ENCODE measurements at regions of chr15 and their contacts with region 1.

Region 1: DNA sequence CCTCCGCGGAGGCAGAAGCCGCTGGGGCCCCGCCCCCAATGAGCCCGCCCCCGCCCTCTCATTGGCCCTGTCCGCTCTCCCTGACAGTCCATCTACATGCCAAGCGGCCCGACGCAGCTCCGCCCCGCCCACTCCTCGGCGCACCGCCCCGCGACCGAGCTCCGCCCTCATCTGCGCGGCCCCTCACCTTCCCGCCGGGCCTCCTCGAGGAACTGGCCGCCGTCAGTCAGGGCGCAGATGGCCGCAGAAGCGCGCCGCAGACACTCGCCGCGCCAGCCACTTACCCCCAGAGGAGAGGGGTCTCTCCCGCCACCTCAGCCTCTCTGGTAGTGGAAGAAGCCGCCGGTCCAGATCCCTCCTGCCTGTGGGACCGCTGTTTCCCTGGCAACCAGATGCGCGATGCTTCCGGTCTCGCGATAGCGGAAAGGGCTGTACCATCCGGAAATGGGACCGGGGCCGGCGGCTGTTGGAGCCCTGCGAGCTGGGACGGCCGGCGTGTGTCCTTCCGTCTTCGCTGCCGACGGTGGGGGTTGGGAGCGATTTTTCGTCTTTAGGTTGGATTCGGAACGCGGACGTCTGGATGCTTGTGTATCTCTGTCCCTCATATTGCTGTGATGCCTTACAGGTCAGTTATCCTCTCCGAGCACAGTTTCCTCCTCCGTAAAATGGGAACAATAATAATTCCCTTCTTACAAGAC is at the start of gene FSIP1:
- DNase-seq: peak; percentile 96 to 99 (median 97)
- H3K4me3 ChIP-seq: peak within 1 kb of the TSS; percentile 97 to 100
- H3K4me3 Mint-ChIP-seq: peak within 1 kb of the TSS; percentile 88 to 98 (median 96)
- H3K27ac ChIP-seq: peak within 1 kb of the TSS; percentile 60
- H3K27ac Mint-ChIP-seq: peak within 1 kb of the TSS; percentile 83 to 97 (median 93)
- H3K4me1 ChIP-seq: peaks cover 38% of the 10 kb centered on the region
- H3K4me1 Mint-ChIP-seq: peaks cover 28 to 55% (median 44%) of the 10 kb centered on the region in 4 donors
- H3K27me3 ChIP-seq: no peaks in the 10 kb centered on the region
- H3K27me3 Mint-ChIP-seq: no peaks in the 10 kb centered on the region
- total RNA-seq, gene FSIP1: 0.47 to 1.1 TPM

Region 2: GRCh38 chr15:39624806-39625205 is 157.8 kb before region 1 on chr15:
- CTCF ChIA-PET with region 1: interaction called, 3 read pairs
- POLR2A ChIA-PET with region 1: interaction called, 22 read pairs
- intact Hi-C with region 1: loop called (anchors 2 kb)
- DNase-seq: peak; percentile 78 to 90 (median 86)
- H3K4me3 ChIP-seq: no peak overlapping the region
- H3K4me3 Mint-ChIP-seq: peak overlapping the region; percentile 76 to 91 (median 82)
- H3K27ac ChIP-seq: peak overlapping the region; percentile 70
- H3K27ac Mint-ChIP-seq: peak overlapping the region; percentile 98 to 100 (median 99)
- H3K4me1 ChIP-seq: peaks cover 80% of the 10 kb centered on the region
- H3K4me1 Mint-ChIP-seq: peaks cover 66 to 89% (median 80%) of the 10 kb centered on the region in 4 donors
- H3K27me3 ChIP-seq: no peaks in the 10 kb centered on the region
- H3K27me3 Mint-ChIP-seq: no peaks in the 10 kb centered on the region

Region 3: DNA sequence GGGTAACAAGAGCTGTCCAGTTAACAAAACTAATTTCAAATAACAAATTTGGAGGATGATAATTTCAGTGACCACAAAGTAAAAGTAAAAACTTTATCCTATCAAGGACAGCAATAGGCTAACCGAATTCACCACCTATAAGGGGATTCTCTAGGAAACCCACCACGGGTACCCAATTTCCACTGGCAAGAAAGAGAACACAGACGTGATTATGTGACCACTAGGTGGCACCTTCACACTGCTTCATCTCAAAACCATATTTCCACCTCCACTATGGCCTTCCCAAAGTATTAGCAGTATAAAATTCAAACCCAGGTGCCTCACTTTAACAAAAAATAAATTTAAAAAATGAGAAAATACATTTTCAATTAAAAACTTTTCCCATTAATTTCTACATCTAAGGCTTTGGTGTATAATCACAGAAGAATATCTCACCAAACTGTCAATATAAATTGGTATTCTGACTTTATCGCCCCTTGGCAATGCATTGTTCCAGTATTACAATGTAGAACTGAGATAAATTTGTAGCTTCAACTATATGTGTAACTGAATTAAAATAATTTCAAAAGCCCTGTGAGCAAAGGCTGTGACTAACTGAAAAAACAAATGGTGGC is 96.5 kb before region 1 on chr15:
- CTCF ChIA-PET with region 1: no interaction called
- POLR2A ChIA-PET with region 1: no interaction called
- intact Hi-C with region 1: no loop called
- DNase-seq: peak in 4 of 5 donors; percentile 28 to 36 (median 31)
- H3K4me3 ChIP-seq: no peak overlapping the region
- H3K4me3 Mint-ChIP-seq: no peak overlapping the region
- H3K27ac ChIP-seq: no peak overlapping the region
- H3K27ac Mint-ChIP-seq: no peak overlapping the region
- H3K4me1 ChIP-seq: no peaks in the 10 kb centered on the region
- H3K4me1 Mint-ChIP-seq: peaks cover 0 to 15% (median 4%) of the 10 kb centered on the region in 4 donors
- H3K27me3 ChIP-seq: no peaks in the 10 kb centered on the region
- H3K27me3 Mint-ChIP-seq: peaks cover 0 to 1% of the 10 kb centered on the region in 2 donors

Region 4: GRCh38 chr15:39720621-39721611 is 61.7 kb before region 1 on chr15:
- CTCF ChIA-PET with region 1: no interaction called
- POLR2A ChIA-PET with region 1: no interaction called
- intact Hi-C with region 1: no loop called
- DNase-seq: no peak
- H3K4me3 ChIP-seq: no peak overlapping the region
- H3K4me3 Mint-ChIP-seq: no peak overlapping the region
- H3K27ac ChIP-seq: no peak overlapping the region
- H3K27ac Mint-ChIP-seq: no peak overlapping the region
- H3K4me1 ChIP-seq: no peaks in the 10 kb centered on the region
- H3K4me1 Mint-ChIP-seq: no peaks in the 10 kb centered on the region
- H3K27me3 ChIP-seq: no peaks in the 10 kb centered on the region
- H3K27me3 Mint-ChIP-seq: peaks cover 0 to 1% of the 10 kb centered on the region in 2 donors

Region 5: GRCh38 chr15:39874890-39875549 is 92.4 kb after region 1 on chr15:
- CTCF ChIA-PET with region 1: interaction called, 16 read pairs
- POLR2A ChIA-PET with region 1: no interaction called
- intact Hi-C with region 1: loop called (anchors 1 kb)
- DNase-seq: peak in 3 of 5 donors; percentile 9 to 21 (median 11)
- H3K4me3 ChIP-seq: no peak overlapping the region
- H3K4me3 Mint-ChIP-seq: no peak overlapping the region
- H3K27ac ChIP-seq: no peak overlapping the region
- H3K27ac Mint-ChIP-seq: no peak overlapping the region
- H3K4me1 ChIP-seq: no peaks in the 10 kb centered on the region
- H3K4me1 Mint-ChIP-seq: peaks cover 0 to 3% (median 0%) of the 10 kb centered on the region in 4 donors
- H3K27me3 ChIP-seq: no peaks in the 10 kb centered on the region
- H3K27me3 Mint-ChIP-seq: peaks cover 2 to 5% of the 10 kb centered on the region in 2 donors

Region 6: GRCh38 chr15:40038638-40039543 is 256.3 kb after region 1 on chr15 and contains the start of gene SRP14:
- CTCF ChIA-PET with region 1: interaction called, 6 read pairs
- POLR2A ChIA-PET with region 1: interaction called, 3 read pairs
- intact Hi-C with region 1: loop called (anchors 1 kb)
- DNase-seq: peak; percentile 89 to 95 (median 90)
- H3K4me3 ChIP-seq: peak within 1 kb of the TSS; percentile 42 to 97
- H3K4me3 Mint-ChIP-seq: peak within 1 kb of the TSS; percentile 96 to 100 (median 99)
- H3K27ac ChIP-seq: peak within 1 kb of the TSS; percentile 98
- H3K27ac Mint-ChIP-seq: peak within 1 kb of the TSS; percentile 87 to 99 (median 98)
- H3K4me1 ChIP-seq: peaks cover 24% of the 10 kb centered on the region
- H3K4me1 Mint-ChIP-seq: peaks cover 22 to 49% (median 33%) of the 10 kb centered on the region in 4 donors
- H3K27me3 ChIP-seq: no peaks in the 10 kb centered on the region
- H3K27me3 Mint-ChIP-seq: no peaks in the 10 kb centered on the region
- total RNA-seq, gene SRP14: 118 to 120 TPM

Measured in CD4-positive, alpha-beta memory T cell (primary cell).